Left ventricle myocardium superior (tissue), 1 donor: ENCODE measurements at regions of chr17 and their contacts with region 1.

Region 1: GRCh38 chr17:30429155-30429554 is 48.1 kb upstream of the GOSR1 start:
- DNase-seq: no peak
- ATAC-seq: no peak

Region 2: DNA sequence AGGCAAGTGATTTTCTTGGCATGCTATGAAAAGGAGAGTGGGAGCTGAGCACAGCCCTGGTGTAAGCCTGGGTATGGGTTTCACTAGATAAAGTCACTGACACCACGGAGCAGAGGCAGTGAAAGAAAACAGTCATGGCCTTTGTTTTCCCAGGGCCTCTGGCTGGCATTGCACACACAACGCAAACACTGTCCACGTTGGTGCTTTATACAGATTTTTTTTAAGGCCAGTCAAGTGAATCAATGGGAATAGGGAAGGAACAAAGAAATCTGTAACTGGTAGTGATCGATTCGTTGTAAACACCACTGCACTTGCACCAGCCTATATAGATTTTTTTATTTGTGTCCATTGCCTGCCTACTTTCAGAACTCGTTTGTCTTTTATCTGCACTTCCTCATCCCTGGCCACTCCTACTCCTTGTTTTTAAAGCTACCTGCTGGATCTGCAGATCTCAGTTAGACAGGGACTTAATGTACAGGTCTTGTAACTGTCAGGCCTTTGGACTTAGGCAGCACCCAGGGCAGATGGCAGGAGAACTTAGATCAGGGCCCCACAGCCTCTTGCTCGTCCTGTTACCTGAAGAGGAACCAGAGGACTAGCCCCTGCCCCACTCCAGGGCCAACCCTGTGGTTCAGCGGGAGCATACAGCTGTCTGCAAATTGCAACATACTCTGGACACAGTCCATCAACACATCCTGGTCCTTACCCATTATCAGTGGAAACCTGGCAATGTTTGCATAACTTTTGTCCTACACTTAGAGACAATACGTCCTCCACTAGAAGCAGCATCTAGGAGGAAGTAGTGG is 84.7 kb before region 1 on chr17:
- intact Hi-C with region 1: loop called (anchors 10 kb)
- DNase-seq: peak; percentile 67
- ATAC-seq: peak; percentile 91